Dendritic cell treated with granulocyte-macrophage colony-stimulating factor and Interleukin-4, amounts not matched to agents 40 ng/mL and 50 ng/mL, for 4 days (primary cell): ENCODE measurements at regions of chr16 and their contacts with region 1.

Region 1: GRCh38 chr16:29805378-29806098 is 791 bp upstream of the MAZ start:
- H3K4me3 Mint-ChIP-seq: peak overlapping the region; percentile 99
- H3K27ac Mint-ChIP-seq: peak overlapping the region; percentile 98
- H3K4me1 Mint-ChIP-seq: peaks cover 56% of the 10 kb centered on the region
- H3K27me3 Mint-ChIP-seq: no peaks in the 10 kb centered on the region

Region 2: GRCh38 chr16:29790183-29790952 is 15.2 kb before region 1 on chr16 and contains the start of gene KIF22:
- intact Hi-C with region 1: loop called (anchors 1 kb)
- H3K4me3 Mint-ChIP-seq: peak within 1 kb of the TSS; percentile 81
- H3K27ac Mint-ChIP-seq: peak within 1 kb of the TSS; percentile 77
- H3K4me1 Mint-ChIP-seq: peaks cover 49% of the 10 kb centered on the region
- H3K27me3 Mint-ChIP-seq: peaks cover 2% of the 10 kb centered on the region

Region 3: DNA sequence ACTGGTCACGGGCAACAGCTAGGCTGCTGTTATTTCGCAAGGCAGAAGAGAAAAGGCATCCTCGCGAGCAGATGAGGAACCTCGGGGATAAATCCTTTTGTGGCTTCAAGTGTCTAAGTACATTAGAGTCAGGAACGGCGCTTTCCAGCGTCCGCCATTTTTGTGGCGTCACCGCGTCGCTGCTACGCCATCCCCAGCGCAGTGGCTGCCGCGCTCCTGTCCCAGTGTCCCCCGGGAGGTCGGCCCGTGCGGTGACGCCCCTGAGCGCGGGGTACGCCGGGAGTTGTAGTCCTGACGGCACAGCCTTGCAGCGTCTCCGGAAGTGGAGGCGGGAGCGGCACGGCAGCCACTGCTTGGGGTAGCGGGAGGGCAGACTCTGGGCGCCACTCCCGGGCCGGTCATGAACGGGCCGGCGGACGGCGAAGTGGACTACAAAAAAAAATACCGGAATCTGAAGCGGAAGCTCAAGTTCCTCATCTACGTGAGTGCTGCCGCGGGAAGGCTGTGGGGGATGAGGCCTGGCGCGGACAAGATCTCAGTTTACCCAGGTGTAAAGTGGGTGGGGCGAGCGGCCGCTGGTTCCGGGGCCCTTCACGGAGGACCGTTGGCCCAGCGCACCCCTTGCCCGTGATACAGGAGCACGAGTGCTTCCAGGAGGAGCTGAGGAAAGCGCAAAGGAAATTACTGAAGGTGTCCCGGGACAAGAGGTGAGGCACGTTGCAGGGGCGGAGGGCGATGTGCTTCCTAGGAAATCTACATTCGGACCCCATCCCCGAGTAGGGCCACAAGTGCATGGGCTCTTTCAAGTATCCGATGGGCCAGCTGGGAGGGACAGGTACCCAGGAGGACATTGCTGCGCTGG is 190.6 kb after region 1 on chr16 and contains the start of gene INO80E:
- intact Hi-C with region 1: loop called (anchors 5 kb)
- H3K4me3 Mint-ChIP-seq: peak within 1 kb of the TSS; percentile 100
- H3K27ac Mint-ChIP-seq: peak within 1 kb of the TSS; percentile 98
- H3K4me1 Mint-ChIP-seq: peaks cover 33% of the 10 kb centered on the region
- H3K27me3 Mint-ChIP-seq: no peaks in the 10 kb centered on the region

Region 4: GRCh38 chr16:30032083-30032819 is 226.7 kb after region 1 on chr16:
- intact Hi-C with region 1: no loop called
- H3K4me3 Mint-ChIP-seq: no peak overlapping the region
- H3K27ac Mint-ChIP-seq: no peak overlapping the region
- H3K4me1 Mint-ChIP-seq: peaks cover 23% of the 10 kb centered on the region
- H3K27me3 Mint-ChIP-seq: peaks cover 88% of the 10 kb centered on the region

Region 5: GRCh38 chr16:30096105-30096861 is 290.7 kb after region 1 on chr16 and contains the start of gene YPEL3:
- intact Hi-C with region 1: no loop called
- H3K4me3 Mint-ChIP-seq: peak within 1 kb of the TSS; percentile 93
- H3K27ac Mint-ChIP-seq: peak within 1 kb of the TSS; percentile 95
- H3K4me1 Mint-ChIP-seq: peaks cover 42% of the 10 kb centered on the region
- H3K27me3 Mint-ChIP-seq: no peaks in the 10 kb centered on the region